ENCODE measurements at regions of chr13 and their contacts with region 1.

Region 1: GRCh38 chr13:32984846-32985544 is 31.2 kb upstream of the KL start:
- DNase-seq: no peak
- H3K4me3 ChIP-seq: no peak overlapping the region
- H3K27ac ChIP-seq: no peak overlapping the region
- H3K4me1 ChIP-seq: no peaks in the 10 kb centered on the region
- H3K27me3 ChIP-seq: peaks cover 2 to 23% of the 10 kb centered on the region in 2 experiments
- CTCF ChIP-seq: no peak
- POLR2A ChIP-seq: no peak

Region 2: GRCh38 chr13:32917504-32917903 is 67.5 kb before region 1 on chr13:
- CTCF ChIA-PET with region 1: no interaction called
- POLR2A ChIA-PET with region 1: no interaction called
- dilution Hi-C with region 1: no loop called
- intact Hi-C with region 1: loop called (anchors 2 kb)
- DNase-seq: peak; percentile 59
- H3K4me3 ChIP-seq: no peak overlapping the region
- H3K27ac ChIP-seq: no peak overlapping the region
- H3K4me1 ChIP-seq: peaks cover 6% of the 10 kb centered on the region
- H3K27me3 ChIP-seq: no peaks in the 10 kb centered on the region
- CTCF ChIP-seq: no peak
- POLR2A ChIP-seq: no peak